ENCODE measurements at regions of chr2 and their contacts with region 1.

Region 1: GRCh38 chr2:201071479-201072200 is at the starts of genes HYCC2 and NDUFB3:
- DNase-seq: peak; percentile 91 to 93 (median 92)
- ATAC-seq: peak; percentile 99 to 100 (median 100)
- H3K4me3 ChIP-seq: peak within 1 kb of the TSS; percentile 70 to 98 (median 90)
- H3K27ac ChIP-seq: peak within 1 kb of the TSS; percentile 82 to 99 (median 92)
- H3K4me1 ChIP-seq: peaks cover 5 to 66% (median 43%) of the 10 kb centered on the region in 12 donors
- H3K27me3 ChIP-seq: no peaks in the 10 kb centered on the region
- CTCF ChIP-seq: peak in 11 of 12 donors; percentile 15 to 58 (median 44)
- POLR2A ChIP-seq: peak in 1 of 2 donors; percentile 65
- total RNA-seq, gene HYCC2: 5.8 to 16.3 (median 12.1) TPM
- total RNA-seq, gene NDUFB3: 197 to 496 (median 348) TPM

Region 2: DNA sequence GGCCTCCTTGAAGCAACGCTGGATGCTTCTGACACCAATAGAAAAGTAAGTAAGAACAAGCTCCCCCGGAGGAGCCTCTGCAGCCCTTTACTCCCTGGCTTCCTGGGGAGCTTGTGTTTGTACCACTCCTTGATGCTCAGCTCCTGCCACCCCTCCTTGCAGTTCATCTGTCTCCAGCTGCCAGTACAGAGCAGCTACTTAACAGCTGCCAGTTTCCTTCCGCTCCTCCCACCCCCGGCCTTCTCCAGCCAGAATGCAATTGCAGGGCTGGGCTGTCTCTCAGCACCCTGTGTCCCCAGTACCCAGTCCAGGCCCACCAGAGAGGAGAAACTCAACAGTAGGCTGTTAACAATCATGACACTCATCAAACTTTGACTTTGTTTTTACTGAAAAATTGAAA is 376.4 kb before region 1 on chr2:
- intact Hi-C with region 1: no loop called
- DNase-seq: peak in 3 of 5 donors; percentile 20 to 67 (median 60)
- ATAC-seq: peak; percentile 64 to 82 (median 73)
- H3K4me3 ChIP-seq: no peak overlapping the region
- H3K27ac ChIP-seq: no peak overlapping the region
- H3K4me1 ChIP-seq: peaks cover 0 to 12% (median 0%) of the 10 kb centered on the region in 12 donors
- H3K27me3 ChIP-seq: no peaks in the 10 kb centered on the region
- CTCF ChIP-seq: no peak
- POLR2A ChIP-seq: no peak

Region 3: GRCh38 chr2:200713003-200713703 is 358.5 kb before region 1 on chr2:
- intact Hi-C with region 1: loop called in 1 of 10 experiments (anchors 5 kb)
- DNase-seq: peak; percentile 81 to 90 (median 89)
- ATAC-seq: peak; percentile 91 to 99 (median 98)
- H3K4me3 ChIP-seq: peak overlapping the region in 10 of 12 donors; percentile 26 to 58 (median 46)
- H3K27ac ChIP-seq: peak overlapping the region in 11 of 12 donors; percentile 23 to 84 (median 61)
- H3K4me1 ChIP-seq: peaks cover 0 to 7% (median 1%) of the 10 kb centered on the region in 12 donors
- H3K27me3 ChIP-seq: peaks cover 0 to 3% (median 0%) of the 10 kb centered on the region in 9 donors
- CTCF ChIP-seq: peak; percentile 60 to 92 (median 84)
- POLR2A ChIP-seq: peak in 1 of 2 donors; percentile 48

Region 4: GRCh38 chr2:200963124-200963917 is 108.3 kb before region 1 on chr2 and contains the start of gene ORC2:
- intact Hi-C with region 1: loop called in 7 of 10 experiments (anchors 1 to 10 kb)
- DNase-seq: peak; percentile 94 to 97 (median 95)
- ATAC-seq: peak; percentile 98 to 99 (median 99)
- H3K4me3 ChIP-seq: peak within 1 kb of the TSS; percentile 69 to 97 (median 88)
- H3K27ac ChIP-seq: peak within 1 kb of the TSS; percentile 83 to 97 (median 92)
- H3K4me1 ChIP-seq: peaks cover 0 to 53% (median 35%) of the 10 kb centered on the region in 12 donors
- H3K27me3 ChIP-seq: no peaks in the 10 kb centered on the region
- CTCF ChIP-seq: peak; percentile 24 to 61 (median 50)
- POLR2A ChIP-seq: peak in 1 of 2 donors; percentile 51
- total RNA-seq, gene ORC2: 6.7 to 38.0 (median 24.0) TPM

Region 5: DNA sequence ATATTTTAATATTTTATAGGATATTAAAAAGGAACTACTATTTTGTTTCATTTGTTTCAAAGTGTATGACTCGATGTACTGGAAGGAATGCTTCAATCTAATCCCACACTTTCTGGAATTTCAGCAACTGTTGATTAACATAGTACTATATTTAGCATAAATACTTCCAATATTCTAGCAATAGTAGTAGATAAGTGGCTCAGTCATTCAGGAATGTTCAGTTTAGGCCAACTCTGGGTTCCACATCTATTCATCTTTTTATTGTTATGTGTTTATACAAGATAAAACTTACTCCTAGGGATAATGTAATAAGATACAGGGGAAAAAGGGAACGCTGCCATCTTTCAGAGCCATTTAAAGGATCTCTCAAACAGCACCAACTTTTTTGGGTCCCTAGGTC is 85.8 kb before region 1 on chr2:
- intact Hi-C with region 1: no loop called
- DNase-seq: no peak
- ATAC-seq: no peak
- H3K4me3 ChIP-seq: no peak overlapping the region
- H3K27ac ChIP-seq: no peak overlapping the region
- H3K4me1 ChIP-seq: peaks cover 0 to 8% (median 0%) of the 10 kb centered on the region in 12 donors
- H3K27me3 ChIP-seq: no peaks in the 10 kb centered on the region
- CTCF ChIP-seq: no peak
- POLR2A ChIP-seq: no peak

Region 6: GRCh38 chr2:201151127-201151981 is 79.7 kb after region 1 on chr2:
- intact Hi-C with region 1: loop called in 7 of 10 experiments (anchors 2 to 5 kb)
- DNase-seq: no peak
- ATAC-seq: peak in 3 of 4 donors; percentile 20 to 58 (median 49)
- H3K4me3 ChIP-seq: peak overlapping the region in 1 of 12 donors; percentile 13
- H3K27ac ChIP-seq: peak overlapping the region; percentile 9 to 89 (median 74)
- H3K4me1 ChIP-seq: peaks cover 5 to 88% (median 39%) of the 10 kb centered on the region in 12 donors
- H3K27me3 ChIP-seq: no peaks in the 10 kb centered on the region
- CTCF ChIP-seq: no peak
- POLR2A ChIP-seq: no peak

Region 7: DNA sequence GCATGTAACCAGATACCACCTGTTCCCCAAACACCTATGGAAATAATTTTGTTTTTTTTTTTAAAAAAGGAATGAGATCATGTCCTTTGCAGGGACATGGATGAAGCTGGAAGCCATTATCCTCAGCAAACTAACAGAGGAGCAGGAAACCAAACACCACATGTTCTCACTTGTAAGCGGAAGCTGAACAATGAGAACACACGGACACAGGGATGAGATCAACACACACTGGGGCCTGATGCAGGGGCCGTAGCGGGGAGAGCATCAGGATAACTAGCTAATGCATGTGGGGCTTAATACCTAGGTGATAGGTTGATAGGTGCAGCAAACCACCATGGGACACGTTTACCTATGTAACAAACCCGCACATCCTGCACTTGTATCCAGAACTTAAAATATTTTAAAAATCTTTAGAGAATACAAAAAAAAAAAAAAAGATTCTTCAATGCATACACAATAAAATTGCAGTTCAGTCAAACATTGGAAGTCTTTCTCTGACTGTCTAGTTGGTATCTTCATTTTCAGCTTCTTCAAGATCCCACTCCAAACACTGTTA is 99.7 kb after region 1 on chr2:
- intact Hi-C with region 1: loop called in 3 of 10 experiments (anchors 5 to 10 kb)
- DNase-seq: no peak
- ATAC-seq: peak in 1 of 4 donors; percentile 19
- H3K4me3 ChIP-seq: no peak overlapping the region
- H3K27ac ChIP-seq: no peak overlapping the region
- H3K4me1 ChIP-seq: peaks cover 0 to 12% (median 0%) of the 10 kb centered on the region in 12 donors
- H3K27me3 ChIP-seq: no peaks in the 10 kb centered on the region
- CTCF ChIP-seq: no peak
- POLR2A ChIP-seq: no peak